ENCODE measurements at regions of chr6 and their contacts with region 1.

Region 1: GRCh38 chr6:42661540-42662153 is 60.8 kb downstream of the PRPH2 start:
- DNase-seq: peak; percentile 80 to 87 (median 84)
- ATAC-seq: peak; percentile 90
- H3K4me3 ChIP-seq: no peak overlapping the region
- H3K27ac ChIP-seq: peak overlapping the region in 1 of 4 donors; percentile 24
- H3K4me1 ChIP-seq: peaks cover 4% of the 10 kb centered on the region
- H3K27me3 ChIP-seq: no peaks in the 10 kb centered on the region
- CTCF ChIP-seq: peak; percentile 70 to 96 (median 92)
- POLR2A ChIP-seq: no peak

Region 2: GRCh38 chr6:42720739-42721138 is 59.1 kb after region 1 on chr6:
- intact Hi-C with region 1: loop called (anchors 5 kb)
- DNase-seq: no peak
- ATAC-seq: no peak
- H3K4me3 ChIP-seq: no peak overlapping the region
- H3K27ac ChIP-seq: no peak overlapping the region
- H3K4me1 ChIP-seq: no peaks in the 10 kb centered on the region
- H3K27me3 ChIP-seq: no peaks in the 10 kb centered on the region
- CTCF ChIP-seq: no peak
- POLR2A ChIP-seq: no peak

Region 3: DNA sequence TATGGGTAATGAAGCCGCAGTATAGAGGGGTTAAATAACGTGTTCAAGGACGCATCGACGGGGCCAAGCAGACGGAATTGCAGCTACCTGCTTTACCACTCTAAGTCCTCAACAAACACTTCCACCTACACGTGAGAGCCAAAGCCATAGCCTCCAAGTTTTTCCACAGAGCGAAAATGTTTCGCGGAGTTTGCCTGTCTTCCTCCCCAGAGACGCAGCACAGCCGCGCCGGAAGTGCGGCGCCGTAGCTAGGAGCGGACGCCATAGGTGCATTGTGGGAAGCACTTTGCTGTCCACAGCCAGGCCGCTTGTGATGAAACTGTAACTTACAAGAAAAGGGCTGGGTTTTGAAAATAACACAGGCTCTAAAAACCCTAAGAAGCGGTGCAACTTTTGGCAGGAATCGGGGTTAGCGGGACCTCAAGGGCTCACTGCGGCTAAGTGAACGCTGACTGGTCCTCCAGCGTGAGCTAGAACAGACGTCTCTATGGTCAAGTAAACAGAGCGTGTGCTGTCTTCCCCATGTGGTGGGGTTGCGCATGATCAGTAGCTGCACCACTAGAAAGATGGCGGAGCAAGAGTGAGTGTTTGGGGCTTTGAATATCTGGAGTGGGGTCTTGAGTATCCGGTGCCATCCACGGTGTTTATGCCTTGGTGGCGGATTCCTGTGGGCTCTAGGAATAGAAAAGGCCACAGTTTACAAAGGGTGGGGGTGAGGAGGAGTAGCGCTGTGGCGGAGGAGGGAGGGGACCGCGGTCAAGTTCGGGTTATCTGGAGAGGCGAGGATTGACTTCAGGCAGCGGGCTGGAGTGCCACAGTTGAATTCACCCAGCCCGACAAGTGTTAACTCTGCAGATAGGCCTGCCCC is 218.0 kb after region 1 on chr6 and contains the start of gene RPL7L1:
- intact Hi-C with region 1: loop called (anchors 5 kb)
- DNase-seq: peak; percentile 79 to 89 (median 86)
- ATAC-seq: peak; percentile 96
- H3K4me3 ChIP-seq: peak within 1 kb of the TSS; percentile 85 to 94
- H3K27ac ChIP-seq: peak within 1 kb of the TSS; percentile 76 to 95 (median 84)
- H3K4me1 ChIP-seq: peaks cover 32% of the 10 kb centered on the region
- H3K27me3 ChIP-seq: no peaks in the 10 kb centered on the region
- CTCF ChIP-seq: peak in 4 of 7 experiments; percentile 14 to 46 (median 34)
- POLR2A ChIP-seq: peak; percentile 35 to 81 (median 76)
- total RNA-seq, gene RPL7L1: 42.2 to 56.3 TPM

Region 4: GRCh38 chr6:43297644-43298564 is 636.3 kb after region 1 on chr6 and contains the start of gene SLC22A7:
- intact Hi-C with region 1: no loop called
- DNase-seq: peak; percentile 47 to 81 (median 64)
- ATAC-seq: peak; percentile 55
- H3K4me3 ChIP-seq: no peak within 1 kb of the TSS
- H3K27ac ChIP-seq: no peak within 1 kb of the TSS
- H3K4me1 ChIP-seq: peaks cover 4% of the 10 kb centered on the region
- H3K27me3 ChIP-seq: no peaks in the 10 kb centered on the region
- CTCF ChIP-seq: no peak
- POLR2A ChIP-seq: no peak
- total RNA-seq, gene SLC22A7: not detected

Measured in body of pancreas (tissue), 4 donors.